ENCODE measurements at regions of chr18 and their contacts with region 1.

Region 1: DNA sequence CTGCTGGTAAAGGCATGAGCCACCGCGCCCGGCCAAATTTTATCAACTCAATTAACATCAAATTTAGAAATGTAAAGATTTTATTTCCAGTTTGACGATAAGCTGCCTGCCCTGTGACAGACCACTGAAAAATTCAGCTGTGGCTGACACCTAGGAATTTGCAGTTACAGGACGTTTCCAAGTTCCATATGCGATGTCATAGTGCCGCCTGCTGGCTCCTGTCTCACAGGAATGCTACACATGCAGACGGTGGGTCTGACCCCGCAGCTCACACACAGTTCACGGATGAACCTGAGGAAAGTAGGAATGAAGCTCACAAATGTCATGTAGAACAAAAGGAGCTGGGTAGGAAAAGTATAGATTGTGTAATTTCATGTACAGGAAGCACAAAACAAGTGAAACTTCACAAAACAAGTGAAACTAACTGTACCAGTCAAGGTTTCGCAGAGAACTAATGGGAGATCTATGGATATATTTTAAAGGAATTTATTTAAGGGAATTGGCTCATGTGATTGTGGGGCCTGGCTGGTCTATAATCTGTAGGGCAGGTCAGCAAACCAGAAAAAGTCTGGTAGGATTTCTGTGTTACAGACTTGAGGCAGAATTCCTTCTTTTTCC is 13.2 kb upstream of the SEH1L start:
- DNase-seq: peak; percentile 87
- ATAC-seq: peak; percentile 91
- H3K4me3 Mint-ChIP-seq: no peak overlapping the region
- H3K27ac Mint-ChIP-seq: no peak overlapping the region
- H3K4me1 Mint-ChIP-seq: peaks cover 2% of the 10 kb centered on the region
- H3K27me3 Mint-ChIP-seq: no peaks in the 10 kb centered on the region

Region 2: DNA sequence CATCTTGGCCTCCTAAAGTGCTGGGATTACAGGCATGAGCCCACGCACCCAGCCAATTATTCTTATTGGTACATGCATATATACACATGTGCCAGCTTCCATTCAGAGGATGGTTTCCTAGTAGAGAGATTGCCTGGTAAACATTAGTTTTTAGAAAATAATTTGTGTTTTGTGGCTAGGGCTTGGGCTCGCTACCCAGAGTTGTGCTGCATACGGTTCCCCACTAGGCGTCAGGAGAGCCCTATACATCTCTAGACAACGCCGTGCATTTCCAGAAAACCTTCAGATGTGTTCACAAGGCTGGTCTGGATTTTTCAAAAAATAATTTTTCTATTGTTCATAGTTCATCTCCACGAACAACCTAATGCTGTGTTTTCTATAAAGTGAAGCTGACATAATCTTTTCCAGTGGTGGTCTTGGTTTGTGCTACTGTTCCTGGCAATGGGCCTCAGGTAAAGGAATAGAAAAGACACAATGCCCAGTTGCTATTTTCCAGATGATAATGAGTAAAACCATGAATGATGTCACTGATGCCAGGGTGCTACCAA is 542.9 kb before region 1 on chr18:
- CTCF ChIA-PET with region 1: no interaction called
- POLR2A ChIA-PET with region 1: no interaction called
- intact Hi-C with region 1: loop called (anchors 1 to 10 kb)
- DNase-seq: peak; percentile 72
- ATAC-seq: peak; percentile 97
- H3K4me3 Mint-ChIP-seq: no peak overlapping the region
- H3K27ac Mint-ChIP-seq: no peak overlapping the region
- H3K4me1 Mint-ChIP-seq: no peaks in the 10 kb centered on the region
- H3K27me3 Mint-ChIP-seq: peaks cover 6% of the 10 kb centered on the region

Region 3: GRCh38 chr18:12726774-12727550 is 207.6 kb before region 1 on chr18:
- CTCF ChIA-PET with region 1: interaction called, 144 read pairs
- POLR2A ChIA-PET with region 1: no interaction called
- intact Hi-C with region 1: loop called (anchors 1 kb)
- DNase-seq: peak; percentile 66
- ATAC-seq: peak; percentile 73
- H3K4me3 Mint-ChIP-seq: no peak overlapping the region
- H3K27ac Mint-ChIP-seq: no peak overlapping the region
- H3K4me1 Mint-ChIP-seq: peaks cover 3% of the 10 kb centered on the region
- H3K27me3 Mint-ChIP-seq: no peaks in the 10 kb centered on the region

Region 4: DNA sequence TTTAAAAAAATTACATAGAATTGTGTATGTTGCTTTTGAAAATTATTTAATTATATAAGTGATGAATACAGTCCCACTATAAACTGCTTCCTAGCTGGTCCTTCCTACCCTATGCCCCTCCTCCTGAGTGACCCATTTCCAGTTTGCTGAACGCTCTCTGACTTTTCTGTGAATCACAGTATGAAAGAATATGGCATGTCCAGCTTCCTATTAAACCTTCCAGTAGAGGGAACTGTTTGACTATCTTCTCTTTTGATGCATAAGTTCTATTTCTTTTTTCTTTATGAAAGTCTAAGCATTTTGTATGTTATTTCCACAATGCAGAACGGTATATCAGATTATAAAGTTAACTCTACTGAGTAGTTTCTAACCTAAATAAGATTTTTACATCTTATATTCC is 190.5 kb before region 1 on chr18:
- CTCF ChIA-PET with region 1: interaction called, 29 read pairs
- POLR2A ChIA-PET with region 1: no interaction called
- intact Hi-C with region 1: loop called (anchors 1 kb)
- DNase-seq: no peak
- ATAC-seq: peak; percentile 78
- H3K4me3 Mint-ChIP-seq: no peak overlapping the region
- H3K27ac Mint-ChIP-seq: no peak overlapping the region
- H3K4me1 Mint-ChIP-seq: peaks cover under 1% of the 10 kb centered on the region
- H3K27me3 Mint-ChIP-seq: no peaks in the 10 kb centered on the region

Region 5: DNA sequence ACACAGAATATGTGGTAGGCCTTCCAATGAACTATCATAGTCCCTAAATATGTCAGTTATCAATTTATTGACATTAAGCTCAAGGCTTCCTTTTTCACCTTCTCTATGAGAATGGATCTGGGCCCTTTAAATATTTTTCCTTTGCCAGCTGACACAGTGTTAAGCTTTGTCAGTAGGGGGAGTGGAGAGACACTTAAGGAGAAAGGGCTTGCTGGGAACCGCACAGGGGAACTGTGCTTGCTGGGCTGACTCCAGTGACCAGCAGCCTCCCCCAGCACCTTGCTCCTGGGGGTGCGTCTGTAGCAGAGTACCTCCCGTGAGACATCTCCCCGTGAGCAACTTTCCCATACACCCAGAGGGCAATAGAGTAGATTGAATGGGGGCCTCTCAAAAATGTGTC is 44.1 kb before region 1 on chr18:
- CTCF ChIA-PET with region 1: interaction called, 16 read pairs
- POLR2A ChIA-PET with region 1: no interaction called
- intact Hi-C with region 1: loop called (anchors 2 to 5 kb)
- DNase-seq: no peak
- ATAC-seq: no peak
- H3K4me3 Mint-ChIP-seq: no peak overlapping the region
- H3K27ac Mint-ChIP-seq: no peak overlapping the region
- H3K4me1 Mint-ChIP-seq: peaks cover 16% of the 10 kb centered on the region
- H3K27me3 Mint-ChIP-seq: peaks cover 7% of the 10 kb centered on the region

Region 6: DNA sequence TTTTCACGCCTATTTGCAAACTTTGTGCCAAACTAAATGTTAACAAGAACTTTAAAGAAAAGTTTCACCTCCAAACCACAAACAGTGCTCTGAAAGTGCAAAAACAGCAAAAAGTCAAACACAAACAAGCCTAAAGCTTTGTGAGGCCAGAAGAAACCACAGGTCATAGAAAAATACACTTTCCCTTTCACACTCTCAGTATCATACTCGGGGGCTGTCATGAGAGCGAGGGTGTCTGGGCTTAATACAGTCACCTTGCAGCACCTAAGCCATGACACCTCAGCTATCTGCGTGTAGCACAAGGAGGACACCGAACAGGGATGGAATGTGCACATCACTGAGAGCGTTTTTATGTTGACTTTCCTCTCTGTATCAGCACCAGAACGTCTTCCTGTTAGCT is 13.4 kb before region 1 on chr18:
- CTCF ChIA-PET with region 1: interaction called, 20 read pairs
- POLR2A ChIA-PET with region 1: no interaction called
- intact Hi-C with region 1: no loop called
- DNase-seq: peak; percentile 42
- ATAC-seq: peak; percentile 95
- H3K4me3 Mint-ChIP-seq: no peak overlapping the region
- H3K27ac Mint-ChIP-seq: no peak overlapping the region
- H3K4me1 Mint-ChIP-seq: peaks cover 8% of the 10 kb centered on the region
- H3K27me3 Mint-ChIP-seq: no peaks in the 10 kb centered on the region

Region 7: DNA sequence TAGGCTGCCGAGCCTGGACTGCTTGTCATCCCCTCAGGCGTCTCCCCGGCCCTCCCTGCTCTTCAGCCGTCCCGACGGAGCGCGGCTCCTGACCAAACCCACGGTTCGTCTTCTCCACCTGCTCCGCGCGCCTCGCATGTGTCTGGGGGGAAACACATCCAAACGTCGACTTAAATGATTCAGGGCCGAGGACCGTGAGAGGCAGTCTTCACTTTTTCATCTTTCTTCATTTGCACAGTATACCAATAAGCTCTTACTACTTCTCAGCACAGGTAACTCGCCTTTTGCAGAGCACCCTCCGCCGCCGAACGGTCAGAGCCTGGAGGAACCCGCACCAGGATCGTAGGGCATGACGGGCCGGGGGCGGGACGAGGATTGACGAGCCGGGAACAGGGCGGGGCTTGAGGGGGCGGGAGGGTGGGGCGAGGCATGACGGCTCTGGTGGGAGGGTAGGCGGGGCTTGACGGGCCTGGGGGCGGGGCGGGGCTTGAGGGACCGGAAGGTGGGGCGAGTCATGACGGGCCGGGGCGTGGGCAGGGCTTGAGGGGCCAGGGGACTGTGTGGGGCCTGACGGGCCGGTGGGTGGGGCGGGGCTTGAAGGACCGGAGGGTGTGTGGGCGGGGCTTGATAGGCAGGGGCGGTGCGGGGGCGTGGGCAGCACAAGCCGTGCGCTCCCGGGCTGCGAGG is 12.9 kb after region 1 on chr18 and contains the start of gene SEH1L:
- CTCF ChIA-PET with region 1: interaction called, 23 read pairs
- POLR2A ChIA-PET with region 1: no interaction called
- intact Hi-C with region 1: no loop called
- DNase-seq: peak; percentile 100
- ATAC-seq: peak; percentile 86
- H3K4me3 Mint-ChIP-seq: peak within 1 kb of the TSS; percentile 89
- H3K27ac Mint-ChIP-seq: peak within 1 kb of the TSS; percentile 97
- H3K4me1 Mint-ChIP-seq: peaks cover 34% of the 10 kb centered on the region
- H3K27me3 Mint-ChIP-seq: no peaks in the 10 kb centered on the region
- total RNA-seq, gene SEH1L: 100 to 107 TPM

Measured in activated CD4-positive, alpha-beta T cell treated with anti-CD3 and anti-CD28 coated beads for 36 hours (primary cell).